Activated naive CD4-positive, alpha-beta T cell treated with anti-CD3 and anti-CD28 coated beads for 36 hours (primary cell): ENCODE measurements at regions of chrX and their contacts with region 1.

Region 1: GRCh38 chrX:74614093-74614909 is at the start of gene RLIM:
- DNase-seq: peak; percentile 94
- H3K4me3 Mint-ChIP-seq: peak within 1 kb of the TSS; percentile 98
- H3K27ac Mint-ChIP-seq: peak within 1 kb of the TSS; percentile 100
- H3K4me1 Mint-ChIP-seq: peaks cover 19% of the 10 kb centered on the region
- H3K27me3 Mint-ChIP-seq: no peaks in the 10 kb centered on the region
- total RNA-seq, gene RLIM: 41.8 to 43.5 TPM

Region 2: DNA sequence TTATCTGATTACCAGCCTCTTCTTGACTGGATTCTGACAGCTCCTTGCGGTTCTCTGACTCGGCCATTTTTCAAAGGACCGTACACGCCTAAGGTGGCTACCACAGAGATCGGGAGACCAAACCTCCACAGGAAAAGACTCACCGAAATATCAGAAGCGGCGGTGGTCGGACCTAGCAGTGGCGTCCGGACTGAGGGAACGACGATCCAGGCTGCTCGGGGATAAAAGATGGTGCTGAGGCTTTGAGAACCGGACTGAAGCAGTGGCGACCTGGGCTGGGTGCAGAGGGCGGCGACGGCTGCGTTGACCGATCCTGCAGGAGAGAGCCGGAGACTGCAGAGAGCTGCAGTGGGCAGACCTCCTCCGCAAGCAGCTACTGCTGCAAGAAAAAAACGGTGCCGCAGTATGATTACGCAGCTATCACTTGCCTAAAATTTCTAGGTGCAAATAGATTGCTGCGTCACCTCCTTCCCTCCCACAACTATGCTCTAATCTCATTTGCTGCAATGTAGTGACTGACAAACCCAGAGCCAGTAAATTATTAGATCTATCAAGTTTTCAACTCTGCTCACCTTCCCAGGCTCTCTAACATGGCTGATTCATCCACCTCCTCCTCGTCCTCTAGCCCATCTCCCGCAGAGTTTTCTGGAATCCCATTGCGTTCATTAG is 1399.7 kb before region 1 on chrX and contains the start of gene NAP1L2:
- CTCF ChIA-PET with region 1: no interaction called
- intact Hi-C with region 1: loop called (anchors 2 kb)
- DNase-seq: peak; percentile 59
- H3K4me3 Mint-ChIP-seq: peak within 1 kb of the TSS; percentile 91
- H3K27ac Mint-ChIP-seq: peak within 1 kb of the TSS; percentile 91
- H3K4me1 Mint-ChIP-seq: peaks cover 19% of the 10 kb centered on the region
- H3K27me3 Mint-ChIP-seq: peaks cover 3% of the 10 kb centered on the region
- total RNA-seq, gene NAP1L2: 2.5 to 2.7 TPM

Region 3: DNA sequence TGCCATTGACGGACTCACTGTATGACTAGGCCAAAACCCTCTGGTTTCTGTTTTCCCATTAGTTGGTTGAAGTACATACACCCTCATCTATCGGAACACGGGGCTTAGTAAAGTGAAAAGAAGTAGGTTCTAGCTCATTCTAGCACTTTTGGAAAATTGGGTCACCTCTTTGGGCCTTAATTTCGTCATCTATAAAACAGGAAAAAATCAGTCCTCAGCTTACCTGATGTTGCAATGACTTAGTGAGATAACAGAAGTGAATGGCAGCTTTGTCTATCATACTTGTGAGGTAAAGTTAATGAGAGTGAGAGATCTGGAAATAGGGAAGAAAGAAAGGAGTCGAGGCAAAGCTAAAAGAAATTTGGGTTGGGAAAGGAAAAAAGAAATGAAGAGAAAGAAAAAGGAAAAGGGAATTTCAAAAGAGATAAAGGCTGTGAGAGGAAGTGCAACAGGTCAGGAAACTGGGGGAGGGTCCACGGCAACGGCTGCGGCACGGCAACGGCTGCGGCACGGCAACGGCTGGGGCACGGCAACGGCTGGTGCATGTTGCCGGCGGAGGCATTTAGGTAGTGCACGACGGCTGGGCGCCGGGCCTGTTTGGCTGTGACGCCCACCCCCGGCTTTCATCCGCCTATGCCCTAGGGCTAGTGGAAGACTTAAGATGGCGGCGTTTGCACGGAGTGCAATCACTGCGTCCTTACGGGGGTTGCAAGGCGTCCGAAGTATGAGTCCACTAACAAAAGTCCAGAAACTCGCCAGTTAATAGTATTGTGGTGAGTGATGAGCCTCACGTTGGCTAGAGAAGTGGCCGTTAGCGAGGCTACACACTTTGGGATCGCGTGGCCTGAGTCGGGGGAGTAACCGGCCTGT is 670.4 kb before region 1 on chrX:
- CTCF ChIA-PET with region 1: no interaction called
- intact Hi-C with region 1: loop called (anchors 1 kb)
- DNase-seq: peak; percentile 87
- H3K4me3 Mint-ChIP-seq: peak overlapping the region; percentile 94
- H3K27ac Mint-ChIP-seq: peak overlapping the region; percentile 95
- H3K4me1 Mint-ChIP-seq: peaks cover 21% of the 10 kb centered on the region
- H3K27me3 Mint-ChIP-seq: no peaks in the 10 kb centered on the region

Region 4: GRCh38 chrX:74325130-74326059 is 288.9 kb before region 1 on chrX:
- CTCF ChIA-PET with region 1: no interaction called
- intact Hi-C with region 1: no loop called
- DNase-seq: no peak
- H3K4me3 Mint-ChIP-seq: no peak overlapping the region
- H3K27ac Mint-ChIP-seq: no peak overlapping the region
- H3K4me1 Mint-ChIP-seq: no peaks in the 10 kb centered on the region
- H3K27me3 Mint-ChIP-seq: no peaks in the 10 kb centered on the region

Region 5: GRCh38 chrX:74578137-74578536 is 36.2 kb before region 1 on chrX:
- CTCF ChIA-PET with region 1: no interaction called
- intact Hi-C with region 1: loop called (anchors 1 kb)
- DNase-seq: peak; percentile 24
- H3K4me3 Mint-ChIP-seq: no peak overlapping the region
- H3K27ac Mint-ChIP-seq: peak overlapping the region; percentile 24
- H3K4me1 Mint-ChIP-seq: peaks cover 10% of the 10 kb centered on the region
- H3K27me3 Mint-ChIP-seq: no peaks in the 10 kb centered on the region

Region 6: DNA sequence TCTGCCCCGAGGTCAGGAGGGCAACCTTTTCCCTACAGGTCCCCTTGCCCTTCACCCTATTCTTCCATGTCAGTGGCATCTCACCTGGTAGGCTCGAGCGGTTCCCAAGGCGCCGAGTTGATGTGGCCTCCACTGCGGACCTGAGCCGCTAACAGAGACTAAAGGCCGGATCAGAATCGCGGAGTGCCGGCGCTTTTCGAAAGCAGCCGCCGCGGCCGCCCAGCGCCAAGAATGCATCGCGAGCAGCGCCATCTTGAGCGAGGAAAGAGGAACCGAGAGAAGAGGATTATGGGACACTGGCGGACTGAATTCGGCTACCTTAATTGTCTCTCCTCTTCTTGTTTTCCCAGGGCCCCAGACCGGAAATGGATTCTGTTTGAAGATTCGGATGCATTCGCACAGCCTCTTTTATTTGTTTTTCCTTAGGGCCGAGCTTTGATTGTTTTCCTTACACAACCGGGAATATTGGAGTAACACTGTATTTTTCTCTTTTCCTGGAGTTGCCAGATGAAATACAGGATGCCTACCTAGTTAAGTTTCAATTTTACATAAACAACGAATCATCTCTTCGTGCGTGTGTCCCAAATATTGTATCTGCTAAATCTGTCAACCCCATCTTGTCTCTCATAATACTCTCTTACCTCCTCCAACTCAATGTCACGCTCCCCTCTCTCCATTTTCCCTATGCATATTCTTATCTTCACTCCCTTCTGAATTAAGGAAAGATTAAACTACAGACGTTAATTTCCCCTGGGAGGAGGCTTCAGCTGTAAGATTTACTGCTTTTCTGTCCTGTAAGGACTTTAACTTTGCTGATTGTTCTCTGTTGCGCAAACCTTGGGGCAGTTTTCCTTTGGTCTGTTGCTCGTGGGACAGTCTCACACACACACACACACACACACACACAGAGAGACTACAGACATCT is 542.0 kb after region 1 on chrX and contains the start of gene ABCB7:
- CTCF ChIA-PET with region 1: interaction called, 3 read pairs
- intact Hi-C with region 1: loop called (anchors 1 kb)
- DNase-seq: peak; percentile 68
- H3K4me3 Mint-ChIP-seq: peak within 1 kb of the TSS; percentile 99
- H3K27ac Mint-ChIP-seq: peak within 1 kb of the TSS; percentile 96
- H3K4me1 Mint-ChIP-seq: peaks cover 45% of the 10 kb centered on the region
- H3K27me3 Mint-ChIP-seq: no peaks in the 10 kb centered on the region
- total RNA-seq, gene ABCB7: 46.8 to 47.6 TPM

Region 7: DNA sequence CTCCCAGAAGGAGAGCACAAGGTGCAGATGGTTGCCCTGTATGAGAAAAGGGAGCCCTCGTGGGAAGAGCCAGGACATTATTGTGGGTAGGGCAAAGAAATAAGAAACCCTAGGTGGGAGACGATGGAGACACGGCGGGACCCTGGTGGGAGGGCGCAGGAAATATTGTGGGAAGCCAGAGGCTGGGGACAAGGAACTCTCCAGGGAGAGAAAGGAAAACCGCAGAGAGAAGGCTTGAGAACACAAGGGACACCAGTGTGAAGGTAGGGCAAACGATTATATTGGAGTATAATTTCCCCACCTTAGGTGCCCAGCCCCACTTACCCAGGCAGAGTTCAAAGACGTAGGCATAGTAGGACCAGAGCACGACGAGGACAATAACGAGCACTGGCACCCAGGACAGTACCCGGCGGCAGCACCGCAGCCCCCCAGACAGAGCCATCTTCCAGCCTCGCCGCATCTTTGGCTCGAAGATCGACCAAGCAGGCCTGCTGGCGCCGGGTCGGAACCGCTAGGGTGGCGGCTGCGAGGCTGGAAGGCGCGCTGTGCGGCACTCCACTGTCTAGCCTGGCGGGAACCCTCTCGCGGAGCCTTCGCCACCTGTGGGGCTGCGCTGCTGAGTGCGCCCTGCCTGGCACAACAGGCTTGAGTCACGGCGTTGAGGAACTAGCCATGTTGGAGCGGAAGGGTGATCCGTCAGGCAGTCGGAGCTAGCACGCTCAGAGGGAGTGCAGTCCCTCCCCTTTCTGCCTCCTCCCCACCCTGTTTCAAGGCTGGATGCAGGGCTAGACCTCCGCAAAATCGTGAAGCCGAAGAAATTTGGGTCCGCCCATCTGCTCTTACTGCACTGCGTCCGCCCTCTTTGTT is 908.5 kb after region 1 on chrX and contains the start of gene ZDHHC15:
- CTCF ChIA-PET with region 1: no interaction called
- intact Hi-C with region 1: loop called (anchors 1 kb)
- DNase-seq: peak; percentile 68
- H3K4me3 Mint-ChIP-seq: peak within 1 kb of the TSS; percentile 80
- H3K27ac Mint-ChIP-seq: peak within 1 kb of the TSS; percentile 70
- H3K4me1 Mint-ChIP-seq: peaks cover 26% of the 10 kb centered on the region
- H3K27me3 Mint-ChIP-seq: no peaks in the 10 kb centered on the region
- total RNA-seq, gene ZDHHC15: 0.17 to 0.21 TPM

Region 8: DNA sequence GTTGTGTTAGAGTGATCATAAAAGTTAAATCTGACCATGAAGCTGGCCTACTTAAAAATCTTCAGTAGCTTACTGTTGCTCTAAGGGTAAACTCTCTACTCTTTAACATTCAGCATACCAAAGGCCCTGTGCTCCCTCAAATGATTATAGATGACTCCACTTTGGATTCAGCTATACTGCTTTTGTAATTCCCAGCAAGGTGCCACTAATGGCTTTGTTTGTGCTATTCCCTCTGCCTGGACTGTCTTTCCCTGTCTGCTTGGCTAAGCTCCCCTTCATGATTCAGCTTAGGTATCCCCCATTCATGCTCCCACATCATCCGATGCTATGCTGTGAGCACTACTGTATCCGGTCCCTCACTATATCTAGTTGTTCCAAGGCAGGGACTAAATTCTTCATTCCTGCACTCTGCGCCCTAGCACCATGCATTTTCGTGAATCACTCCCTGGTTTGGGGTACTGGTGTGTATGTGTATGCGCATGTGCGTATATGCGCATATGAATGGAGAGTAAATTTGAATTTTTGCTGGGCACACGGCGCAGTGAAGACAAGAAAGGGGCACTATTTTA is 1558.1 kb after region 1 on chrX:
- CTCF ChIA-PET with region 1: no interaction called
- intact Hi-C with region 1: loop called (anchors 10 kb)
- DNase-seq: no peak
- H3K4me3 Mint-ChIP-seq: peak overlapping the region; percentile 92
- H3K27ac Mint-ChIP-seq: peak overlapping the region; percentile 93
- H3K4me1 Mint-ChIP-seq: peaks cover 53% of the 10 kb centered on the region
- H3K27me3 Mint-ChIP-seq: no peaks in the 10 kb centered on the region